Mucosa of descending colon (tissue), 3 donors: ENCODE measurements at regions of chr15 and their contacts with region 1.

Region 1: GRCh38 chr15:38563723-38564519 is 693 bp downstream of the RASGRP1 start:
- DNase-seq: peak; percentile 83 to 89 (median 88)
- ATAC-seq: peak; percentile 92
- H3K4me3 ChIP-seq: peak overlapping the region; percentile 22
- H3K4me1 ChIP-seq: no peaks in the 10 kb centered on the region
- CTCF ChIP-seq: peak; percentile 90

Region 2: DNA sequence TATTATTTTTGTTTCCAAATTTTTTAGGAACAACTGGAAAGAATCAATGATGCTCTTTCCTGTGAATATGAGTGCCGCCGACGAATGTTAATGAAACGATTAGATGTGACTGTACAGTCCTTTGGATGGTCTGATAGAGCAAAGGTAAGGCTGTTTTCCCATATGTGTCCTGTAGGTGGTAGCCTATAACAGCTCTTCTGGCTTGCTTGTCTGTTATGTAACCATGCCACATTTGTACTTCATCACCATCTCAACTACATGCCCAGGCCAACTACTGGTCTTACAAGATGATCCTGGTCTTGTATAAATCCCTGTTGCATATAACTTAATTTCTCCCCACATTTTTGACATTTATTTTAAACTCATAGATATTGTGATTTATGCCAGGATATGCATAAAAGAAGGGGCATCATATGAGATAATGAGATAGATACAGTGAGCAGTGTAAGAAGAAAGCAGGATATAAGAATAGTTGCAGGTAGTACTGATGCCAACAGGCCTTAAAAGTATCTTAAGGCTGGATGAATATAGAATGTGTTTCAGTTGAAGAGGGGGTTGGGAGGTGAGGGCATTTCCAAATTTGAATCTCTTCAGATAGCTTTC is 89.7 kb before region 1 on chr15:
- intact Hi-C with region 1: loop called in 1 of 2 experiments (anchors 10 kb)
- DNase-seq: peak in 1 of 3 donors; percentile 70
- ATAC-seq: peak; percentile 99
- H3K4me3 ChIP-seq: no peak overlapping the region
- H3K4me1 ChIP-seq: no peaks in the 10 kb centered on the region
- CTCF ChIP-seq: peak; percentile 36